Activated naive CD4-positive, alpha-beta T cell treated with anti-CD3 and anti-CD28 coated beads for 36 hours (primary cell): ENCODE measurements at regions of chr14 and their contacts with region 1.

Region 1: DNA sequence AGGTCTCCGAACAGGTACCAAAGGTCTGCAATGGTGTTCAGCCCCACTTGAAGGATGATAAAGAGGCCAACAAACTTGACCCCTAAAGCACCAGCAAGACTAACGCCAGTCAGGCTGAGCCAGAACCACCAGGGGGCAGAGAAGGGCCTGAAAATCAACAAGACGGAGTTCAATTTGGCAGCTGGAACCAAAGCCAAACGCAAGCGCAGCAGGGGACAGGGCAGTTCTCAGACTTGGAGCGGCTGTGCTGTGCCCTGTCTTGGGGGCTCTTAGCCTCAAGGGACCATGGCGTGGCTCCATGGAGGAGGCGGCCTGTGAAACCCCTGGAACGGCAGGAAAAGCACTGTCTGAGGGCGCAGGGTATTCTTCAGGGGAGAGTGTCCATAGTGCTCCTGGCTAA is 19.6 kb downstream of the POMT2 start:
- DNase-seq: peak; percentile 82
- H3K4me3 Mint-ChIP-seq: no peak overlapping the region
- H3K27ac Mint-ChIP-seq: no peak overlapping the region
- H3K4me1 Mint-ChIP-seq: peaks cover 13% of the 10 kb centered on the region
- H3K27me3 Mint-ChIP-seq: no peaks in the 10 kb centered on the region

Region 2: DNA sequence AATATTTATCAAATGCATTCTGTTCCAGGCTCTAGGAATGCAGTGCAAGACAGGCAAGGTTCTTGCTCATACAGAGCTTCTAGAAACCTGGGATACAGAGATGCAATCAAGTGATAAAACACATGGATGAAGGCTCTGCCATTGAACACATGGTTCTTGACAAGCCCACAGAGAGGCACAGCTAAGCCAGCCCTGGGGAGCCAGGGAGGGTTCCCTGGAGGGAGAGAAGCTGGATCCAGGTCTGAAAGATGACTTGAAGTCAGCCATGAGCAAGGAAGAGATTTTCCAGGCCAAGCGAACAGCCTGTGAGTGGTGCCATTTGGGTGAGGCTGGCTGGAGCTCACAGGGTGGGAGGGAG is 338.8 kb before region 1 on chr14:
- CTCF ChIA-PET with region 1: no interaction called
- intact Hi-C with region 1: loop called (anchors 5 kb)
- DNase-seq: no peak
- H3K4me3 Mint-ChIP-seq: peak overlapping the region; percentile 68
- H3K27ac Mint-ChIP-seq: peak overlapping the region; percentile 98
- H3K4me1 Mint-ChIP-seq: peaks cover 90% of the 10 kb centered on the region
- H3K27me3 Mint-ChIP-seq: no peaks in the 10 kb centered on the region

Region 3: GRCh38 chr14:77314043-77314442 is 12.9 kb after region 1 on chr14:
- CTCF ChIA-PET with region 1: interaction called, 124 read pairs
- intact Hi-C with region 1: loop called (anchors 1 kb)
- DNase-seq: no peak
- H3K4me3 Mint-ChIP-seq: no peak overlapping the region
- H3K27ac Mint-ChIP-seq: no peak overlapping the region
- H3K4me1 Mint-ChIP-seq: no peaks in the 10 kb centered on the region
- H3K27me3 Mint-ChIP-seq: no peaks in the 10 kb centered on the region

Region 4: DNA sequence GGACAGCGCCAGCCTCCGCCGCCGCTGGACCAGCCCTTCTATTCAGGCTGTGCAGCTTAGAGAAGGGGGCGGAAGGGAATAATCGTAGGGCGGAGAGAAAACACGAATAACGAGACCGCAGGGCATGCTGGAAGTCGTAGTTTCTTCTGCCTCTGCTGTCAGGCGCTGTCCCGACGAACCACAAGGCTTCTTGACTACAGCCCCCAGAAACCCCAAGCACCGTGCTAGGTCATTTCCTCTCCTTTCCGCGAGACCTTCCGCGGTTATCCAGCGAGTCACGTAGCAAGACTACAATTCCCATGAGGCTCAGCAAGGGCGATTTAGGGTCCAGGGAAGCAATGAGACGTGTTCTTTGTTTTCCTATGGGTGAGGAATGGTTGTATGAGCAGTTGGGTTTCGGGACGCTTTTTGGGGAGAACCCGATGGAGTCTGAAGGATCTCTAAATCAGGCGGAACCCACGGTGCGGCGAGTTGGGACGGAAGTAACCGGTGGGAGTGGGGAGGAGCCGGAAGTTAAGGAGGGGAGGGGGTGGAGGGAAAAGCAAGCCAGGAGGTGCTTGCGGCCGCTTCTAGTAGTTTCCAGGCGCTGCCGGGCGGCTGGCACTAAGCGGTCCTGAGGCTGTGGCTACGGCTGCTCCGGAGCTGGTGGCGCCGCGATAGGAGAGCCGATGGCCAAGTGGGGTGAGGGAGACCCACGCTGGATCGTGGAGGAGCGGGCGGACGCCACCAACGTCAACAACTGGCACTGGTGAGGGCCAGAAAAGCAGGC is 156.6 kb after region 1 on chr14 and contains the starts of genes AHSA1 and VIPAS39:
- CTCF ChIA-PET with region 1: no interaction called
- intact Hi-C with region 1: loop called (anchors 1 kb)
- DNase-seq: peak; percentile 98
- H3K4me3 Mint-ChIP-seq: peak within 1 kb of the TSS; percentile 100
- H3K27ac Mint-ChIP-seq: peak within 1 kb of the TSS; percentile 100
- H3K4me1 Mint-ChIP-seq: peaks cover 32% of the 10 kb centered on the region
- H3K27me3 Mint-ChIP-seq: no peaks in the 10 kb centered on the region
- total RNA-seq, gene AHSA1: 230 to 246 TPM
- total RNA-seq, gene VIPAS39: 12.3 to 13.3 TPM

Region 5: DNA sequence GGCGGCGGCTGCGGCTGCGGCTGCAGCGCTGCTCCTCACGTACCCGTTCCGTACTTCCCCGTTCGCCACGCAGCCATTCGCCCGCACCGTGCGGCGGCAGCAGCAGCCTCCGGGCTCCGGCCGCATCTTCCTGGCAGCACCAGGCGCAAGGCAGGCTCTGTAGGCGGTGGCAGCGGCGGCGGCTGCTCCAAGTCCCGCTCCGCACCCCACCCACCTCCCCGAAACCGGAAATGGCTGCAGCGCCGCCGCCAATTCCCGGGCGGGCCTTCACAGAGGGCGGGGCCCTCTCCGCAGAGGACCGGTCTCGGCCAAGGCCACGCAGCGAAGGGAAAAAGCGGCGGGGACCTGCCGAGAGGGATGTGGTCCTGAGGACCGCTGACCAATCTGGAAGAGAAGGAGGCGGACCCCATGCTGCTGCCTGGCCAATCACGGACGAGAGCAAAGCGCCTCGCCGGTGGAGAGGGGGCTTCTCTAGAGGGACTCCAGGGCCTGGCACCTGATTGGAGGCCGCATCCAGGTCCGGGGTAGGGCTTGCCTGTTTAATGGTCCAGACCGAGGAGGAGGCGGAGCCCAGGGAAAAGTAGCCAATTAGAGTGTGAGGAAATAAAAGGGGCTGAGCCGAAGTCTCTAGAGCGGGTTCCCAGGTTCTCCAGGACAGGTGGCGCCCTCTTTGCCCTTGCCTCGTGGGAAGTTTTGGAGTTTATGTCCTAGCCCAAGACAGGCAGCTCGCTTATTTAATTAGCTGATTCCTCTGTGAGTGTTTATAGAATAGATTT is 315.5 kb after region 1 on chr14 and contains the start of gene SPTLC2:
- CTCF ChIA-PET with region 1: no interaction called
- intact Hi-C with region 1: no loop called
- DNase-seq: peak; percentile 96
- H3K4me3 Mint-ChIP-seq: peak within 1 kb of the TSS; percentile 90
- H3K27ac Mint-ChIP-seq: peak within 1 kb of the TSS; percentile 79
- H3K4me1 Mint-ChIP-seq: peaks cover 32% of the 10 kb centered on the region
- H3K27me3 Mint-ChIP-seq: no peaks in the 10 kb centered on the region
- total RNA-seq, gene SPTLC2: 16.1 to 18.1 TPM

Region 6: GRCh38 chr14:77707724-77708408 is 406.8 kb after region 1 on chr14 and contains the starts of genes ALKBH1 and SLIRP:
- CTCF ChIA-PET with region 1: no interaction called
- intact Hi-C with region 1: loop called (anchors 5 kb)
- DNase-seq: peak; percentile 92
- H3K4me3 Mint-ChIP-seq: peak within 1 kb of the TSS; percentile 87
- H3K27ac Mint-ChIP-seq: peak within 1 kb of the TSS; percentile 88
- H3K4me1 Mint-ChIP-seq: peaks cover 48% of the 10 kb centered on the region
- H3K27me3 Mint-ChIP-seq: no peaks in the 10 kb centered on the region
- total RNA-seq, gene ALKBH1: 13.5 to 14.5 TPM
- total RNA-seq, gene SLIRP: 134 to 149 TPM